ENCODE measurements at regions of chr6 and their contacts with region 1.

Region 1: DNA sequence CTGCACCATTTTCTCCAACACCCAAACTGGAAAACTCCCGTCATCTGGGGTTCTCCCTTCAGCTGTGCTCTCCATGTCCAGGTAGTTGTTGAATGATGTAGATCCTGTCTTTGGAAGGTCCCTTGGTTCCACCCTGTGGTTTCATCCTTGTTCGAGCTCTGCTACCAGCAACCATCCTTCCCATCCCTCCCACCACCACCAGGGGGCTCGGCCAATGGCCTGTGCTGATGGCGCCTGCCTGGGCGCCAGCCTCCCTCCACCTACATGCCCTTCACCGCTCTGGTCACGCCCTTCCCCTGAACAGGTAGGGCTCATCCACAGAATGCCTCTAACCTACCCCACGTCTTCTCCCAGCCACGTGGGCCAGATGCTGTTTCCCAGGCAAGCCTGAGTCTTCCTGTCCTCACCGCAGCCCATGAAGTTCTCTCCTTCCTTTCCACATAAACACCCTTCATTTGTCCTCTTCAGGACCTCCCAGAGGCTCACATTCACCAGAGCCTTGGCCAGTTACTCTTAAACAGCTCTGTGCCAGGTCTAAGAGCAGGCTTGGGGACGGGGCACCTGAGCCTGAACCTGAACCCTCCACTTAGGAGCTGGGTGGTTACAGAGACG is 75.1 kb upstream of the DUSP22 start:
- DNase-seq: no peak
- H3K4me3 Mint-ChIP-seq: no peak overlapping the region
- H3K27ac Mint-ChIP-seq: peak overlapping the region; percentile 11
- H3K4me1 Mint-ChIP-seq: peaks cover 56% of the 10 kb centered on the region
- H3K27me3 Mint-ChIP-seq: no peaks in the 10 kb centered on the region

Region 2: GRCh38 chr6:195861-196360 is 21.2 kb before region 1 on chr6:
- CTCF ChIA-PET with region 1: interaction called, 11 read pairs
- POLR2A ChIA-PET with region 1: interaction called, 3 read pairs
- DNase-seq: peak; percentile 70
- H3K4me3 Mint-ChIP-seq: peak overlapping the region; percentile 7
- H3K27ac Mint-ChIP-seq: peak overlapping the region; percentile 91
- H3K4me1 Mint-ChIP-seq: peaks cover 48% of the 10 kb centered on the region
- H3K27me3 Mint-ChIP-seq: no peaks in the 10 kb centered on the region

Region 3: GRCh38 chr6:241096-241865 is 24.1 kb after region 1 on chr6:
- CTCF ChIA-PET with region 1: no interaction called
- POLR2A ChIA-PET with region 1: no interaction called
- DNase-seq: no peak
- H3K4me3 Mint-ChIP-seq: no peak overlapping the region
- H3K27ac Mint-ChIP-seq: no peak overlapping the region
- H3K4me1 Mint-ChIP-seq: peaks cover 16% of the 10 kb centered on the region
- H3K27me3 Mint-ChIP-seq: peaks cover 2% of the 10 kb centered on the region

Region 4: GRCh38 chr6:286681-287488 is 69.7 kb after region 1 on chr6:
- CTCF ChIA-PET with region 1: no interaction called
- POLR2A ChIA-PET with region 1: no interaction called
- DNase-seq: peak; percentile 5
- H3K4me3 Mint-ChIP-seq: no peak overlapping the region
- H3K27ac Mint-ChIP-seq: no peak overlapping the region
- H3K4me1 Mint-ChIP-seq: peaks cover 36% of the 10 kb centered on the region
- H3K27me3 Mint-ChIP-seq: no peaks in the 10 kb centered on the region

Region 5: GRCh38 chr6:2103644-2104523 is 1886.7 kb after region 1 on chr6:
- CTCF ChIA-PET with region 1: no interaction called
- POLR2A ChIA-PET with region 1: no interaction called
- DNase-seq: no peak
- H3K4me3 Mint-ChIP-seq: no peak overlapping the region
- H3K27ac Mint-ChIP-seq: no peak overlapping the region
- H3K4me1 Mint-ChIP-seq: peaks cover 1% of the 10 kb centered on the region
- H3K27me3 Mint-ChIP-seq: no peaks in the 10 kb centered on the region

Measured in activated CD4-positive, alpha-beta T cell treated with anti-CD3 and anti-CD28 coated beads, Interleukin-2, amount 10 ng/mL, durations not matched to agents 7 days and 5 days (primary cell).